Endothelial cell of umbilical vein (primary cell): ENCODE measurements at regions of chr21 and their contacts with region 1.

Region 1: GRCh38 chr21:31580866-31581276 is 78.6 kb upstream of the SOD1 start:
- DNase-seq: peak; percentile 60
- H3K4me3 ChIP-seq: no peak overlapping the region
- H3K27ac ChIP-seq: no peak overlapping the region
- H3K4me1 ChIP-seq: peaks cover 11% of the 10 kb centered on the region
- H3K27me3 ChIP-seq: no peaks in the 10 kb centered on the region
- CTCF ChIP-seq: peak; percentile 66 to 78
- POLR2A ChIP-seq: no peak

Region 2: DNA sequence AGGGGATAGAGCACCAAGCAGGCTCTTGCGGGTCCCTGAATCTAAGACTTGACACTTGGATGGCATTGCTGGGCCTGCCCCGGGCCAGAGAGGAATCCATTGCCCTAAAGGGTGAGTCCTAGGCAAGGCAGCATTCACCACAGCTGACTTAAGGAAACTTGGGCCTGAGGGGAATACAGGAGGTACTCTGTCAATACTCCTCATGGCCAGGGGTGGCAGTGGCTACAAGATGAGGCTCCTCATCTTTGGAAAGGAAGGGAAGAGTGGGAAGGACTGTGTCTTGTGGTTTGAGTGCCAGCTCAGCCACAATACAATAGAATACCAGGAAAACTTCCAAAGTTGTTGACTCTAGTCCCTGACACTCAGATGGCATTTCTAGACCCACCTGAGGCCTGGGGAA is 974.9 kb before region 1 on chr21:
- CTCF ChIA-PET with region 1: no interaction called
- POLR2A ChIA-PET with region 1: no interaction called
- dilution Hi-C with region 1: no loop called
- intact Hi-C with region 1: no loop called
- DNase-seq: no peak
- H3K4me3 ChIP-seq: no peak overlapping the region
- H3K27ac ChIP-seq: no peak overlapping the region
- H3K4me1 ChIP-seq: no peaks in the 10 kb centered on the region
- H3K27me3 ChIP-seq: no peaks in the 10 kb centered on the region
- CTCF ChIP-seq: no peak
- POLR2A ChIP-seq: no peak

Region 3: GRCh38 chr21:31098576-31099005 is 482.3 kb before region 1 on chr21:
- CTCF ChIA-PET with region 1: interaction called, 35 read pairs
- POLR2A ChIA-PET with region 1: no interaction called
- dilution Hi-C with region 1: no loop called
- intact Hi-C with region 1: loop called (anchors 1 kb)
- DNase-seq: peak; percentile 49
- H3K4me3 ChIP-seq: no peak overlapping the region
- H3K27ac ChIP-seq: no peak overlapping the region
- H3K4me1 ChIP-seq: no peaks in the 10 kb centered on the region
- H3K27me3 ChIP-seq: no peaks in the 10 kb centered on the region
- CTCF ChIP-seq: peak; percentile 78 to 80
- POLR2A ChIP-seq: no peak

Region 4: DNA sequence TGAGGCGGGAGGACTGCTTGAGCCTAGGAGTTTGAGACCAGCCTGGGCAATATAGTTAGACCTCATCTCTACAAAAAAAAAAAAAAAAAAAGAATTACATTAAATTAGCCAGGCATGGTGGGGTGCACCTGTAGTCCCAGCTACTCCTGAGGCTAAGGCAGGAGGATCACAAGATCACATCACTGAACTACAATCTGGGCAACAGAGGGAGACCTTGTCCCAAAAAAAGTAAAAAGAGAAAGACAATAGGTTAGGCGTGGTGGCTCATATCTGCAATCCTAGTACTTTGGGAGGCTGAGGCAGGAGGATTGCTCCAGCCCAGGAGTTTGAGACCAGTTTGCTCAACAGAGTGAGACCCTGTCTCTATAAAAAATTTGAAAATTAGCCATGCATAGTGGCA is 367.1 kb before region 1 on chr21:
- CTCF ChIA-PET with region 1: interaction called, 11 read pairs
- POLR2A ChIA-PET with region 1: no interaction called
- dilution Hi-C with region 1: no loop called
- intact Hi-C with region 1: no loop called
- DNase-seq: no peak
- H3K4me3 ChIP-seq: no peak overlapping the region
- H3K27ac ChIP-seq: no peak overlapping the region
- H3K4me1 ChIP-seq: no peaks in the 10 kb centered on the region
- H3K27me3 ChIP-seq: no peaks in the 10 kb centered on the region
- CTCF ChIP-seq: no peak
- POLR2A ChIP-seq: no peak

Region 5: DNA sequence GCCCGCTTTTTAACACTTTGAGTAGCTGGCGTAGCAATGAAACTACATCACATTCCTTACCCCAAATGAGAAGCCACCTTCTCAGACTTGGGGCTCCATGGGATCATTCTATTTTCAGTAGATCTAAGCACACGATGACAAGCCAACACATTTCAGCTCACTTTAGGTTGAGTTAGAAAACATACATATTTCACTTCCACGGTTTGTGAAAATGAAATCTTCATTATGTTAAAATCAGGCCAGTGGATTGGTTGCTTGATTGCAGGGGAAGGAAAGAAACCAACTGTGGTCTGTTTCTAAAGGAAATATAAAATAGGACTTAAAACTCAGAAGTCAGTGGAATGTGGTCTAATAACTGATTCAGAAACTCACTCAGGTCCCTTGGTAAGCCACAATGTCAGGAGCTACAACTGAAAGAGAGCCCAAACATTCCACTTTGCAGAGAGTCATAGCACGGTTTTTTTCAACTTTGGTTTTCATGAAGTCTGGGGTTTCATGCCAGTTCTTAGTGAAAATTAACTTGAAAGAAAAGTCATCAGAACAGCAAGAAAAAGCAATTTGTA is 154.6 kb before region 1 on chr21:
- CTCF ChIA-PET with region 1: no interaction called
- POLR2A ChIA-PET with region 1: no interaction called
- dilution Hi-C with region 1: no loop called
- intact Hi-C with region 1: no loop called
- DNase-seq: no peak
- H3K4me3 ChIP-seq: no peak overlapping the region
- H3K27ac ChIP-seq: no peak overlapping the region
- H3K4me1 ChIP-seq: no peaks in the 10 kb centered on the region
- H3K27me3 ChIP-seq: no peaks in the 10 kb centered on the region
- CTCF ChIP-seq: no peak
- POLR2A ChIP-seq: no peak

Region 6: DNA sequence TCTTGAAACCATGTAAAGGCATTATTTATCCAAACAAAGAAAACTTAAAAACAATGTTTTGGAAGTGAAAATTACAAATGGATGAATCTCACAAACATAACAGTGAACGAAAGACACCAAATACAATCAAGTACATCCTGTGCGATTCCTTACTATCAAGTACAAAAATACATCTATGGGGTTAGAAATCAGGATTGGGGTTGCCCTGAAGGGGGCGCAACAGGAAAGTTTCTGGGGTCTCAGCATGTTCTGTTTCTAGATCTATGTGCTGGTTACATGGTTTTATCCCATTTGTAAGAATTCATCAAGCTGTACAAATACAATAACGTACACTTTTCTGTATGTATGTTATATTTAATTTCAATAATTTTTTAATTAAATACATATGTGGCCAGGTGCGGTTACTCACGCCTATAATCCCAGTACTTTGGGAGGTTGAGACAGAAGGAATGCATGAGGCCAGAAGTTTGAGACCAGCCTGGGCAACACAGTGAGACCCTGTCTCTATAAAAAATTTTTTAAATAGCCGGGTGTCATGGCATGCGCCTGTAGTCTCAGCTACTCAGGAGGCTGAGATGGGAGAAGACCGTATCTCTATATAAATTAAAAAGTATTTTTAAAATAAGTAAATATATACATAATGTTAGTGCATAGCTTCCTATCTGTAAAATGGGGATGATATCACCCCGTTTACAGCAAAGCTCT is 42.8 kb before region 1 on chr21:
- CTCF ChIA-PET with region 1: no interaction called
- POLR2A ChIA-PET with region 1: no interaction called
- dilution Hi-C with region 1: no loop called
- intact Hi-C with region 1: loop called (anchors 2 kb)
- DNase-seq: no peak
- H3K4me3 ChIP-seq: no peak overlapping the region
- H3K27ac ChIP-seq: no peak overlapping the region
- H3K4me1 ChIP-seq: no peaks in the 10 kb centered on the region
- H3K27me3 ChIP-seq: no peaks in the 10 kb centered on the region
- CTCF ChIP-seq: no peak
- POLR2A ChIP-seq: no peak

Region 7: DNA sequence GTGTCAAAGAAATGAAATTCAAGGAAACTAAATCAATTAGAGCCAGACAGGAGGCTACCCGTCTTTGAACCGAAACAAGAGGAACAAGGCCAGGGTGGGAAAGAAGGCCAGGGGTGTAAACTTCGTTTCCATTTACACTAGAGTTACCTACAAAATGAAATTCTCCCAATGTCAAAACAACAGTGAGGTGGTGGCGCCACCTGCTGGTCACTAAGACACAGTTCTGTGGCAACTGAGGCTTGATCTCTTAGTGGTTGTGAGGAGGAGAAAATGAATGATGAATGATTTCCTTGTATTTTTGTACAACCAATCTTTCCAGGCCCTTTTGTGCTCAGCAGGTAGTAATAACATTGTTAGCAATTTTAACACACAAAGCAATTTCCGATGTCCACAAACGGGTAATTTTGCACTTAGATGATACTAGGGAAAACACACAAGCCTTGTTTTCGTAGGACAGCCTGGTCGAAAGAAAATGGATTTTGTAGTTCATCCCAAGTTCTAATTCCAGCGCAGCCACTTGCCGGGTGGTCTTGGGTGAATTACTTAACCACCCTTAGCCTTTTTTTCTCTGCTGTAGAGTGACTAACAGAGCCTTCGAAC is 23.8 kb after region 1 on chr21:
- CTCF ChIA-PET with region 1: interaction called, 18 read pairs
- POLR2A ChIA-PET with region 1: no interaction called
- dilution Hi-C with region 1: no loop called
- intact Hi-C with region 1: loop called (anchors 1 kb)
- DNase-seq: peak; percentile 66
- H3K4me3 ChIP-seq: no peak overlapping the region
- H3K27ac ChIP-seq: no peak overlapping the region
- H3K4me1 ChIP-seq: no peaks in the 10 kb centered on the region
- H3K27me3 ChIP-seq: no peaks in the 10 kb centered on the region
- CTCF ChIP-seq: peak; percentile 73 to 82
- POLR2A ChIP-seq: no peak

Region 8: DNA sequence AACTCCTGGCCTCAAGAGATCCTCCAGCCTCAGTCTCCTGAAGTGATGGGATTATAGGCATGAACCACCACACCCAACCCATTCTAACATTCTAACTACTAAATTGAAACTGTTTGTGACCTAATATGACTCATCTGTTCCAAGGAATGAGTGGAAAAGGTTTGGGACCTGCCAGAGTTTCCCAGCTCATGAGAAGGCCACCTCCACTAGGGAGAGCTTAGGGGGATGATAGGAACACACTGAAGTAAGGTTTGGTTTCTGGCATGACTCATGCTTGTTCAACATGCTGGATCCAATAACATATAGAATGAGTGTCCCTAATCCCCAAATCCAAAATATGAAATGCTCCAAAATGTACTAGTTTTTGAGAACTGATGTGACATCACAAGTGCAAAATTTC is 170.0 kb after region 1 on chr21:
- CTCF ChIA-PET with region 1: no interaction called
- POLR2A ChIA-PET with region 1: no interaction called
- dilution Hi-C with region 1: no loop called
- intact Hi-C with region 1: no loop called
- DNase-seq: no peak
- H3K4me3 ChIP-seq: no peak overlapping the region
- H3K27ac ChIP-seq: no peak overlapping the region
- H3K4me1 ChIP-seq: no peaks in the 10 kb centered on the region
- H3K27me3 ChIP-seq: peaks cover 0 to 3% of the 10 kb centered on the region in 2 experiments
- CTCF ChIP-seq: no peak
- POLR2A ChIP-seq: no peak